ENCODE measurements at regions of chr5 and their contacts with region 1.

Region 1: GRCh38 chr5:170603578-170604565 is 100.1 kb downstream of the KCNIP1 start:
- DNase-seq: peak; percentile 84
- H3K4me3 ChIP-seq: no peak overlapping the region
- H3K27ac ChIP-seq: no peak overlapping the region
- H3K4me1 ChIP-seq: peaks cover 0 to 25% of the 10 kb centered on the region in 2 experiments; a peak in 1 of 4 replicates
- H3K27me3 ChIP-seq: peaks cover 14% of the 10 kb centered on the region; the same call in 1 of the 2 replicates
- CTCF ChIP-seq: peak; percentile 79
- EP300 ChIP-seq: no peak
- RAD21 ChIP-seq: peak; percentile 89

Region 2: GRCh38 chr5:170087168-170087817 is 516.6 kb before region 1 on chr5:
- CTCF ChIA-PET with region 1: no interaction called
- POLR2A ChIA-PET with region 1: no interaction called
- DNase-seq: no peak
- H3K4me3 ChIP-seq: no peak overlapping the region
- H3K27ac ChIP-seq: no peak overlapping the region
- H3K4me1 ChIP-seq: no peaks in the 10 kb centered on the region
- H3K27me3 ChIP-seq: no peaks in the 10 kb centered on the region; the same call in 1 of the 2 replicates
- CTCF ChIP-seq: no peak
- EP300 ChIP-seq: no peak
- RAD21 ChIP-seq: no peak

Region 3: GRCh38 chr5:170614720-170615119 is 10.8 kb after region 1 on chr5:
- CTCF ChIA-PET with region 1: interaction called, 614 read pairs
- POLR2A ChIA-PET with region 1: no interaction called
- DNase-seq: no peak
- H3K4me3 ChIP-seq: no peak overlapping the region
- H3K27ac ChIP-seq: no peak overlapping the region; a peak in 2 of 4 replicates
- H3K4me1 ChIP-seq: peaks cover 4 to 37% of the 10 kb centered on the region in 2 experiments; a peak in 2 of 4 replicates
- H3K27me3 ChIP-seq: no peaks in the 10 kb centered on the region
- CTCF ChIP-seq: no peak
- EP300 ChIP-seq: peak in 1 of 2 experiments; percentile 53; a peak in 1 of 4 replicates
- RAD21 ChIP-seq: no peak

Region 4: GRCh38 chr5:170722316-170722715 is 118.4 kb after region 1 on chr5:
- CTCF ChIA-PET with region 1: no interaction called
- POLR2A ChIA-PET with region 1: no interaction called
- DNase-seq: no peak
- H3K4me3 ChIP-seq: no peak overlapping the region
- H3K27ac ChIP-seq: no peak overlapping the region
- H3K4me1 ChIP-seq: no peaks in the 10 kb centered on the region
- H3K27me3 ChIP-seq: peaks cover 5% of the 10 kb centered on the region; the same call in 1 of the 2 replicates
- CTCF ChIP-seq: no peak
- EP300 ChIP-seq: no peak
- RAD21 ChIP-seq: no peak

Region 5: DNA sequence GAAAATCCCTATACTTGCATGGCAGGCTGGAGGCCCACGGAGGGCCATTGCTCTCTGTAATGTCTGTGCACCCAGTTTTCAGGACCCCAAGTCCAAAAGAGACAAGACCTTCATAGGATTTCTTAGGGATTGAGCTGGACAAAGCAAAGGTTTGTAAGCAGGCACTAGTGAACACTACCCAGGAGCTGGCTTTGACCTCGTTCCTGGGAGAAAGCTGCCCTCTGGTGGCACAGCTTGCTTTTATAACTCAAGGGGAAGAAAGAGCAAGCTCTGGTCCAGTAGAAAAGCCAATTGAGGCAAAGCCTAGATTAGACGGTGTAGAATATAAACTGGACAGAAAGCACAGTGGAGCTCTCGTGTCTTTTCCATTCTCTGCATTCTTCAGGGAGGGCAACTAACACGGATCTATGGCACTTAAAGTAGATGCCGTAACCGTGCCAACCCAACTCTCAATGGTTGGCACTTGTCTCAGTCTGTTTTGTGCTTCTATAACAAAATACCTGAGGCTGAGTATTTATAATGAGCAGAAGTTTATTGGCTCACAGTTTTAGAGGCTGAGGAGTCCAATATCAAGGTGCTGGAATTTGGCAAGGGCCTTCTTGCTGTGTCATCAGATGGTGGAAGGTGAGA is 187.6 kb after region 1 on chr5:
- CTCF ChIA-PET with region 1: interaction called, 15 read pairs
- POLR2A ChIA-PET with region 1: no interaction called
- DNase-seq: peak; percentile 76
- H3K4me3 ChIP-seq: no peak overlapping the region; a peak in 1 of 4 replicates
- H3K27ac ChIP-seq: no peak overlapping the region
- H3K4me1 ChIP-seq: peaks cover 0 to 5% of the 10 kb centered on the region in 2 experiments; a peak in 1 of 4 replicates
- H3K27me3 ChIP-seq: no peaks in the 10 kb centered on the region; the same call in 1 of the 2 replicates
- CTCF ChIP-seq: peak; percentile 63
- EP300 ChIP-seq: no peak
- RAD21 ChIP-seq: peak; percentile 96

Region 6: DNA sequence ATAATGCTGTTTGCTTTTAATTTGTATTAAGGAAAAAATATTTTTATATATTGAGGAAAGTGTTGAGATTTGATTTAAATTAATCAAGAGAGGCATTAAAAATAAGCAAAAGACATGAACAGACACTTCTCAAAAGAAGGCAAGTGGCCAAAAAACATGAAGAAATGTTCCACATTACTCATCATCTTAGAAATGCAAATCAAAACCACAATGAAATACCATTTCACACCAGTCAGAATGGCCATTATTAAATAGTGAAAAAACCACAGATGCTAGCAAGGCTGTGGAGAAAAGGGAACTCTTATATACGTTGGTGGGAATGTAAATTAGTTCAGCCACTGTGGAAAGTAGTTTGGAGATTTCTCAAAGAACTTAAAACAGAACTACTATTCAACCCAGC is 303.9 kb after region 1 on chr5:
- CTCF ChIA-PET with region 1: no interaction called
- POLR2A ChIA-PET with region 1: no interaction called
- DNase-seq: no peak
- H3K4me3 ChIP-seq: no peak overlapping the region
- H3K27ac ChIP-seq: no peak overlapping the region
- H3K4me1 ChIP-seq: no peaks in the 10 kb centered on the region
- H3K27me3 ChIP-seq: no peaks in the 10 kb centered on the region
- CTCF ChIP-seq: no peak
- EP300 ChIP-seq: no peak
- RAD21 ChIP-seq: no peak

Region 7: GRCh38 chr5:171242521-171242920 is 638.6 kb after region 1 on chr5:
- CTCF ChIA-PET with region 1: no interaction called
- POLR2A ChIA-PET with region 1: no interaction called
- DNase-seq: no peak
- H3K4me3 ChIP-seq: no peak overlapping the region
- H3K27ac ChIP-seq: no peak overlapping the region
- H3K4me1 ChIP-seq: no peaks in the 10 kb centered on the region
- H3K27me3 ChIP-seq: no peaks in the 10 kb centered on the region
- CTCF ChIP-seq: no peak
- EP300 ChIP-seq: no peak
- RAD21 ChIP-seq: no peak